ENCODE measurements at regions of chr11 and their contacts with region 1.

Region 1: DNA sequence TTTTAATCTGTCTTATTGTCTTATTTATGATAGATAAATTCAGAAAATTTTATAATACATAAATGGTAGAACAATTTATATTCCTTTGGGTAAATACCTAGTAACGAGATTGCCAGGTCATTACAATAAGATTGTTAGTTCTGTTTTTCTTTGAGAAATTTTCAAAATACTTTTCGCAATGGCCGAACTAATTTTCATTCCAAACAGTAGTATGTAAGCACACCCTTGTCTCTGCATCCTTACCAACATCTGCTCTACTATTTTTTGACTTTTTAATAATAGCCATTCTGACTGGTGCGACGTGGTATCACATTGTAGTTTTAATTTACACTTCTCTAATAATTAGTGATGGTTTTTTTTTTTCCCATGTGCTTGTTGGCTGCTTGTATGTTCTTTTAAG is 351.4 kb upstream of the LUZP2 start:
- DNase-seq: peak; percentile 2
- ATAC-seq: no peak
- H3K4me3 ChIP-seq: no peak overlapping the region
- H3K27ac ChIP-seq: no peak overlapping the region
- H3K4me1 ChIP-seq: no peaks in the 10 kb centered on the region
- H3K27me3 ChIP-seq: no peaks in the 10 kb centered on the region
- CTCF ChIP-seq: no peak
- POLR2A ChIP-seq: no peak
- RAD21 ChIP-seq: no peak

Region 2: DNA sequence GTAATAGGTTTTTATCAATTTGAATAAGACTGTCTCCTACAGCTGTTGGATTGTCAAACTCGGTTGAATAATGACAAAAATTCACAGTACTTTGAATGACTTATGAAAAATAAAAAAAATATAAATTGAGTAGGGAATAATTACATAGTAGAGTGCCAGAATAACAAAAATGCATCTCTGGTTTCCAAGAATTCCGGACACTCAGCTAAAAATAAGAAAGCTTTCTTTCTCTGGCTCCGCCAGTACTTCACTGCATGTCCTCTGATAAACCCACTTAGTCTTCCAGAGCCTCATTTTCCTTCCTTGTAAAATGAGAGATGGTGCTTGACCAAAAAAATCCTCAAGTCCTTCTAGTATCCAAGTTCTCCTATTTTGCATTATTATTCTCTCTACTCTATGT is 23.1 kb before region 1 on chr11:
- CTCF ChIA-PET with region 1: no interaction called
- POLR2A ChIA-PET with region 1: no interaction called
- dilution Hi-C with region 1: no loop called
- in situ Hi-C with region 1: no loop called
- intact Hi-C with region 1: loop called (anchors 1 kb)
- DNase-seq: no peak
- ATAC-seq: no peak
- H3K4me3 ChIP-seq: no peak overlapping the region
- H3K27ac ChIP-seq: no peak overlapping the region
- H3K4me1 ChIP-seq: no peaks in the 10 kb centered on the region
- H3K27me3 ChIP-seq: no peaks in the 10 kb centered on the region
- CTCF ChIP-seq: no peak
- POLR2A ChIP-seq: no peak
- RAD21 ChIP-seq: no peak